Activated CD4-positive, alpha-beta T cell treated with anti-CD3 and anti-CD28 coated beads for 36 hours (primary cell): ENCODE measurements at regions of chr5 and their contacts with region 1.

Region 1: DNA sequence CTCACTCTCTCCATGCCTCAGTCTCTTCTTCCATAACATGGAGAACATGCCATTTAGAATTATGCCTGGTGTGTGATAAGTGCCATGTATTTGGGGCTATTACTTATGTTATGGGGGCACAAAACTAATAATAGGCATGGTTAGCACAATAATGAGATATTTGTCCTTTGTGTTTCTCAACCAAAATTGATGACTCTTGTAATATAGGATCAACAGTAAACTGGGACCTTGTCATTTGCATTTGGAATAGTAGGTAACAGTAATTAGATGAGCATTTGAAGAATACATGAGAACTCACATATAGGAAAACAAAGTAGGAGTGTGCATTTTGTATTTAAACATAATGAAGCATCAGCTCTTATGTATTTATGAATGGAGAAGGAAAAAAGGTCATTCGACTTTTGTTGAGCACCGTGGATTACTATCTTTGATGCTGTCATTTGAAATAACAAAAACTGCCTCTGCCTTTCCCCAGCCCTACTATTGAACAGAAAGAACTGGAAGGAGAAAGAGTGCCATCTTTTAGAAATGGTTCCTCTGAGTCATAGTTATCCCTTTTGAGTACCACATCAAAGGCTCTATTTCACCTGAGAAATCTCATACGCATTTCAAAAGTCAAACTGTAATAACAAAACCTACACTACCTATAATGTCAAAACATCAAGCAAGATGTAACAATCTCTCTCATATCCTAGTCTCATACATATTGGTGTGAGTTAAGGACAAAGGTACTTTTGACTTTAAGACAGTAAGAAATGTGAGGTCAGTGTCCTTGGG is 655.2 kb downstream of the PDE4D start:
- DNase-seq: peak; percentile 20
- ATAC-seq: peak; percentile 96
- H3K4me3 Mint-ChIP-seq: no peak overlapping the region
- H3K27ac Mint-ChIP-seq: no peak overlapping the region
- H3K4me1 Mint-ChIP-seq: peaks cover 22% of the 10 kb centered on the region
- H3K27me3 Mint-ChIP-seq: peaks cover 45% of the 10 kb centered on the region

Region 2: GRCh38 chr5:59760798-59761348 is 522.6 kb after region 1 on chr5:
- CTCF ChIA-PET with region 1: no interaction called
- POLR2A ChIA-PET with region 1: no interaction called
- intact Hi-C with region 1: loop called in 1 of 2 experiments (anchors 2 kb)
- DNase-seq: peak; percentile 62
- ATAC-seq: peak; percentile 95
- H3K4me3 Mint-ChIP-seq: no peak overlapping the region
- H3K27ac Mint-ChIP-seq: no peak overlapping the region
- H3K4me1 Mint-ChIP-seq: no peaks in the 10 kb centered on the region
- H3K27me3 Mint-ChIP-seq: peaks cover 2% of the 10 kb centered on the region